WTC11 (cell line): ENCODE measurements at regions of chr17 and their contacts with region 1.

Region 1: GRCh38 chr17:47733047-47733673 is at the start of gene TBX21:
- DNase-seq: peak; percentile 79
- ATAC-seq: peak; percentile 79
- H3K4me3 Mint-ChIP-seq: peak within 1 kb of the TSS; percentile 81
- H3K27ac Mint-ChIP-seq: no peak within 1 kb of the TSS
- H3K4me1 Mint-ChIP-seq: peaks cover 9% of the 10 kb centered on the region
- H3K27me3 Mint-ChIP-seq: peaks cover 77% of the 10 kb centered on the region
- CTCF ChIP-seq: no peak
- total RNA-seq, gene TBX21: 0.15 to 0.18 TPM in 2 of 3 replicates, not detected in the other

Region 2: GRCh38 chr17:47633996-47634395 is 99.2 kb before region 1 on chr17:
- CTCF ChIA-PET with region 1: no interaction called
- POLR2A ChIA-PET with region 1: no interaction called
- DNase-seq: no peak
- ATAC-seq: no peak
- H3K4me3 Mint-ChIP-seq: no peak overlapping the region
- H3K27ac Mint-ChIP-seq: no peak overlapping the region
- H3K4me1 Mint-ChIP-seq: no peaks in the 10 kb centered on the region
- H3K27me3 Mint-ChIP-seq: no peaks in the 10 kb centered on the region
- CTCF ChIP-seq: no peak

Region 3: GRCh38 chr17:47708863-47709541 is 24.2 kb before region 1 on chr17:
- CTCF ChIA-PET with region 1: interaction called, 15 read pairs
- POLR2A ChIA-PET with region 1: no interaction called
- DNase-seq: peak; percentile 49
- ATAC-seq: peak; percentile 81
- H3K4me3 Mint-ChIP-seq: peak overlapping the region; percentile 43
- H3K27ac Mint-ChIP-seq: no peak overlapping the region
- H3K4me1 Mint-ChIP-seq: peaks cover 9% of the 10 kb centered on the region
- H3K27me3 Mint-ChIP-seq: peaks cover 34% of the 10 kb centered on the region
- CTCF ChIP-seq: no peak

Region 4: DNA sequence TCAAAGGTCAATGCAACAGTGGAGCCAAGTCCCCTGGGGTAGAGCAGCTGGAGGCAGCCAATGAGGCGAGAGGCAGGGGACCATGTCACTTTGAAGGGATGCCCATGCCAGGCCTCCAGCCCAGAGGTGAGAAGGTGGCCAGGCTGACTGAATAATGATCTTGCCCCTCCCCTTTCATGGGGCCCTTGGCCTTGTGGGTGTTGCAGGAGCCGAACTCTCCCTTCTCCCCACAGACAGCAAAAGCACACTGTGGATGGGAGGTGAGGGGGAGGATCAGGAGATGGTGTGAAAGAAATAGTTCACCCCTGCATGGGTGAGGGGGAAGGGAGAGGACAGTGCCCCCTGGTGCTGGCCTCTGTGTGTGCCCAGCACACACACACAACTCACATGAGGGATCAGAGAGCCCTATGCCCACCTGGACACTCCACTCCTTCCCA is 15.9 kb before region 1 on chr17:
- CTCF ChIA-PET with region 1: interaction called, 23 read pairs
- POLR2A ChIA-PET with region 1: no interaction called
- DNase-seq: no peak
- ATAC-seq: peak; percentile 5; the same call in 1 of the 2 replicates
- H3K4me3 Mint-ChIP-seq: no peak overlapping the region
- H3K27ac Mint-ChIP-seq: no peak overlapping the region
- H3K4me1 Mint-ChIP-seq: peaks cover 21% of the 10 kb centered on the region
- H3K27me3 Mint-ChIP-seq: peaks cover 73% of the 10 kb centered on the region
- CTCF ChIP-seq: no peak

Region 5: DNA sequence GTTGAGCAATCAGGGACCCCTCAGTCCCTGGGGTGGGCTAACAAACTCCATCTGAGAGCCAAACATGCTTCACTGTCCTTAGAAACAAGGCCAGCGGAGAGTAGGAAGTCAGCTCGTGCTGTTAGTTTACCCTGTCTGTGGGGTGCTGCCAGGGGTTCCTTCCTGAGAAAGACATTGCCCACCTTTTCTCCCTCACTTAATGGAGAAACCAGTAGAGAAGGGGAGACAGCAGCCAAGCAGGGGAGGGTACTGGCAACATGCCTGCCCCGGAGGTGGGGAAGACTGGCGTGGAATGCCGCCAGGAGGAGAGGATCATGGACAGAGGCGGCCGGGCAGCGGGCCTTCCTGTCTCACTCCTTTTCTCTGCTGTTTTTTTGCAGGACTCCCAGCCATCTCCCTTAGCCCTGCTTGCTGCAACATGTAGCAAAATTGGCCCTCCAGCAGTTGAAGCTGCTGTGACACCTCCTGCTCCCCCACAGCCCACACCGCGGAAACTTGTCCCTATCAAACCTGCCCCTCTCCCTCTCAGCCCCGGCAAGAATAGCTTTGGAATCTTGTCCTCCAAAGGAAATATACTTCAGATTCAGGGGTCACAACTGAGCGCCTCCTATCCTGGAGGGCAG is 182.7 kb after region 1 on chr17:
- CTCF ChIA-PET with region 1: no interaction called
- POLR2A ChIA-PET with region 1: no interaction called
- DNase-seq: no peak
- ATAC-seq: no peak
- H3K4me3 Mint-ChIP-seq: no peak overlapping the region
- H3K27ac Mint-ChIP-seq: no peak overlapping the region
- H3K4me1 Mint-ChIP-seq: no peaks in the 10 kb centered on the region
- H3K27me3 Mint-ChIP-seq: no peaks in the 10 kb centered on the region
- CTCF ChIP-seq: no peak